Ovary (tissue), 10 donors: ENCODE measurements at regions of chr7 and their contacts with region 1.

Region 1: GRCh38 chr7:140653319-140654108 is 12.9 kb upstream of the DENND2A start:
- DNase-seq: peak; percentile 63 to 79 (median 70)
- H3K4me3 ChIP-seq: no peak overlapping the region
- H3K27ac ChIP-seq: no peak overlapping the region
- H3K4me1 ChIP-seq: peaks cover 1% of the 10 kb centered on the region
- H3K27me3 ChIP-seq: no peaks in the 10 kb centered on the region
- CTCF ChIP-seq: peak; percentile 80 to 91 (median 85)
- EP300 ChIP-seq: no peak
- POLR2A ChIP-seq: no peak

Region 2: DNA sequence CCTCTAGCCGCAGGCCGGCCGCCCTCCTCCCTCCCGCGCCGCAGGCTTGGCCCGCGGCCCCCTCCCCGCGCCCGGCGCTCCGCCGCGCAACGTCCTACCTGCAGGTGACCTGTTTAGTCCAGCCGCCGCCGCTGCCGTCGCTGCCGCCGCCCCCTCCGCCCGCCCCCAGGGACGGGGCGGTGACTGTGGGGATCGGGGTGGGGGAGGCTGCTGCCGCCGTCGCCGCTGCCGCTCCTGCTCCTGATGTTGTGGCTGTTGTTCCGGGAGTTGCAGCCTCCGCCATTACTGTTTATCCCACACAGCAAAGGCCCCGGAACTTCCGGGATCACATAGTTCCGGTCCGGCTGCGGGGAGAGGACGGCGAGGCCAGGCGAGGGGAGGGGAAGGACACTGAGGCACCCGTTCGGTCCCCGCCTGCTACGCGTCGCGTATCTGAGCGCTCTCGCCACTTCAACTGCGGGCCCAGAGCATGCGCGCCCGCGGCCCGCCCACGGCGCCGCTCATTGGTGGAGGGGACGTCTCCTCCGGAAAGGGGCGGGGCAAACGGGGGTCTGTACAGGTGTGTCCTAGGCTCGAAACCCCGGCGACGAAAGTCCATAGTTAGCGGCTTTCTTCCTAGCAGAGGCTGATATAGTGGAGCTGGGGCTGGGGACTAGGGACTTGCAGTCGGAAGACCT is 174.3 kb before region 1 on chr7 and contains the start of gene MKRN1:
- intact Hi-C with region 1: loop called in 1 of 4 experiments (anchors 10 kb)
- DNase-seq: peak; percentile 84 to 89 (median 86)
- H3K4me3 ChIP-seq: peak within 1 kb of the TSS; percentile 96
- H3K27ac ChIP-seq: peak within 1 kb of the TSS; percentile 47 to 55
- H3K4me1 ChIP-seq: peaks cover 2% of the 10 kb centered on the region
- H3K27me3 ChIP-seq: no peaks in the 10 kb centered on the region
- CTCF ChIP-seq: no peak
- EP300 ChIP-seq: no peak
- POLR2A ChIP-seq: peak; percentile 45
- total RNA-seq, gene MKRN1: 42.0 to 91.0 (median 73.6) TPM

Region 3: GRCh38 chr7:140517546-140518369 is 135.8 kb before region 1 on chr7:
- intact Hi-C with region 1: loop called (anchors 1 to 5 kb)
- DNase-seq: peak; percentile 91 to 95 (median 94)
- H3K4me3 ChIP-seq: no peak overlapping the region
- H3K27ac ChIP-seq: peak overlapping the region in 1 of 2 donors; percentile 55
- H3K4me1 ChIP-seq: peaks cover 3% of the 10 kb centered on the region
- H3K27me3 ChIP-seq: no peaks in the 10 kb centered on the region
- CTCF ChIP-seq: peak; percentile 85 to 92 (median 91)
- EP300 ChIP-seq: no peak
- POLR2A ChIP-seq: no peak